PC-3 (cell line): ENCODE measurements at regions of chr15 and their contacts with region 1.

Region 1: DNA sequence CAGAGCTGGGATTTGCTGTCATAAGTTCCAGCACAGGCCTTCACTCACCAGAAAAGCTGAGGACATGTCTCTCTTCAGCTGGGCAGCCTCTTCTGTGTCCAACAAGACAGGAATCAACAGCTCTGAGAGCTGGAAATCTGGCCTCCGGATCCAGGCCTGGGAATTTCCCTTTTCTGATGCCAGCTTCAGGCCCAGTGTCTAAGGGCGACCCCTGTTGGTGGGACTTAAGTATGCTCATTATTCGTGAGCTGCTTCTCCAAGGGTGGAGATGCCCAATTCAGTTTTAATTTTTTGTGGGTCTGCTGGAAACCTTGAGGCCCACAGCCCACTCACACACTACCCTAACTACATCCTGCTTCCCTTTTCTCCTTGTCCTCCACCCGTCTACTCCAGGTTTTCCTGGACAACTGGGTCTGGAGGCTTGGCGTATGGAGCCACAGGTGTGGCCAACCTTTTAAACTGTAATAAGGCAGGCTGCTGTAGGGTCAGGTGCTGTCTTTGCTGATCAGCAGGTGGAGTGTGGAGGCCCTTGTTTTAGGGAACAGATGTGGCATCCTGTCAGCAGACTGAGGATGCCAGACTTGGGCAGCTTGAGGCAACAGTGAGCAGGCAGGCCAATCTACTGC is 2.6 kb upstream of the CEMIP start:
- DNase-seq: peak; percentile 74
- ATAC-seq: no peak
- H3K4me3 ChIP-seq: no peak overlapping the region
- H3K27ac ChIP-seq: peak overlapping the region; percentile 74
- H3K4me1 ChIP-seq: peaks cover 27% of the 10 kb centered on the region
- H3K27me3 ChIP-seq: 0 out of 2 replicates have a peak, but pooled peaks cover 4% of the 10 kb centered on the region
- CTCF ChIP-seq: peak; percentile 80

Region 2: DNA sequence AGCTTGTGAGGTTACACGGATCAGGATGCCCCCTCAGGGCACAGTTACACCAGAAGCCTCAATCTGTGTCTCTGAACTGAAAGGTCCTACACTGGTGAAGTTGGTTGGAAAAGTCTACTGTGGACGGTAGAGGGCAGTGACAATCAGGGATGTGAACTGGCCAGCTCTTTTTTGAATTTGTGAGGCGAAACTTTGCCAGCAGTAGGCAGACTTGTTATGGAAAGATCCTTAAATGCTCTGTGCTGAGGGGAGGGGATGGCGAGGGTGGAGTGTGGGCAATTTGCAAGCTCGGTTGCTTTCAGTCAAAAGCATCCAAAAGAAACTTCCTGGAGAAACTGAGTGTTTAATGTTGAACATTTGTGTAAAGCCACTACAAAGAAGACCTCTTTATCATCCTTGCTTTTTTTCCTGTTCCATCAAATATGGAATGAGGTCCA is 208.8 kb before region 1 on chr15:
- CTCF ChIA-PET with region 1: interaction called, 44 read pairs
- POLR2A ChIA-PET with region 1: no interaction called
- intact Hi-C with region 1: loop called (anchors 1 kb)
- DNase-seq: peak; percentile 82
- ATAC-seq: peak; percentile 89
- H3K4me3 ChIP-seq: no peak overlapping the region
- H3K27ac ChIP-seq: peak overlapping the region; percentile 27
- H3K4me1 ChIP-seq: peaks cover 7% of the 10 kb centered on the region
- H3K27me3 ChIP-seq: no peaks in the 10 kb centered on the region
- CTCF ChIP-seq: peak; percentile 95

Region 3: GRCh38 chr15:80609512-80609946 is 167.0 kb before region 1 on chr15:
- CTCF ChIA-PET with region 1: no interaction called
- POLR2A ChIA-PET with region 1: no interaction called
- intact Hi-C with region 1: loop called (anchors 5 kb)
- DNase-seq: peak; percentile 9
- ATAC-seq: peak; percentile 31; the same call in 1 of the 2 replicates
- H3K4me3 ChIP-seq: no peak overlapping the region
- H3K27ac ChIP-seq: no peak overlapping the region
- H3K4me1 ChIP-seq: 0 out of 2 replicates have a peak, but pooled peaks cover 2% of the 10 kb centered on the region
- H3K27me3 ChIP-seq: no peaks in the 10 kb centered on the region
- CTCF ChIP-seq: no peak

Region 4: DNA sequence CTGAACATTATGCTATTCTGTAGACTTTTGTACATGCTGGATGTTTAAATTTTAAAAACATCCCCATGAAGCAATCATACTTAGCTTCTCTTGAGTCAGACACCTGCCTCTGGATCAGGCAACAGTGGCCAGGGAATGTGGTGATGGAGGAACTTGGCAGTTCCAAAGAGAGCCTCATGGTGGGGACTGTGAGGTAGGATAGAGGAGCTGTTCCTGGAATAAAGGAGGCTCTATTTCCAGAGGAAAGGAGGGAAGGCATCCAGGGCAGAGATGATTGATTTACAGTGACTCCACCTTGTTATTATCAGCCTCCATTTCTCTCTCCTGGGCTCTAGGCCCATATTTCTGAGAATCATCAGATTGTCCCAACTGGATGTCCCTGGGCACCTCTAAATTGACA is 116.4 kb before region 1 on chr15:
- CTCF ChIA-PET with region 1: interaction called, 20 read pairs
- POLR2A ChIA-PET with region 1: no interaction called
- intact Hi-C with region 1: loop called (anchors 1 kb)
- DNase-seq: peak; percentile 79
- ATAC-seq: peak; percentile 98
- H3K4me3 ChIP-seq: no peak overlapping the region
- H3K27ac ChIP-seq: 0 out of 2 replicates have a peak overlapping the region, but pooled peaks have one; percentile 12
- H3K4me1 ChIP-seq: peaks cover 18% of the 10 kb centered on the region
- H3K27me3 ChIP-seq: no peaks in the 10 kb centered on the region
- CTCF ChIP-seq: peak; percentile 81

Region 5: DNA sequence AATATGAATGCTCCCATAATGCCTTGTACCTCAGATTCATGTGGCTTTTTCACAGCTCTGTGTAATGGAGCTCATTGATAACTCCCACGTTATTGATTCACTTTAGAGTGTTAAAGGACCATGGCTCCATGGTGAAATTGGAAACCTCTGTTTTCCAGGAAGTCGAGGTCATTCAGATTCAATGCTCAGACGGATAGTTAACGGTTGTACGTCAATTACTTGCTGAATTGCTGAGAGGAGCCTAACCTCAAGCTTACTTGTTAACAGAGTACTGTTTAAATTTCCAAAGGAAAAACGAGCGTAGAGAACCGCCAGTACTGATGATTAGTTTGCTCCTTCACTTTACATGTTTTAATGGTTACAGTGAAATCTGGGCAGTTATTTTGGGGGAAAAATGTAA is 70.4 kb before region 1 on chr15:
- CTCF ChIA-PET with region 1: no interaction called
- POLR2A ChIA-PET with region 1: no interaction called
- intact Hi-C with region 1: no loop called
- DNase-seq: no peak
- ATAC-seq: no peak
- H3K4me3 ChIP-seq: no peak overlapping the region
- H3K27ac ChIP-seq: no peak overlapping the region
- H3K4me1 ChIP-seq: peaks cover 25% of the 10 kb centered on the region
- H3K27me3 ChIP-seq: no peaks in the 10 kb centered on the region
- CTCF ChIP-seq: no peak

Region 6: DNA sequence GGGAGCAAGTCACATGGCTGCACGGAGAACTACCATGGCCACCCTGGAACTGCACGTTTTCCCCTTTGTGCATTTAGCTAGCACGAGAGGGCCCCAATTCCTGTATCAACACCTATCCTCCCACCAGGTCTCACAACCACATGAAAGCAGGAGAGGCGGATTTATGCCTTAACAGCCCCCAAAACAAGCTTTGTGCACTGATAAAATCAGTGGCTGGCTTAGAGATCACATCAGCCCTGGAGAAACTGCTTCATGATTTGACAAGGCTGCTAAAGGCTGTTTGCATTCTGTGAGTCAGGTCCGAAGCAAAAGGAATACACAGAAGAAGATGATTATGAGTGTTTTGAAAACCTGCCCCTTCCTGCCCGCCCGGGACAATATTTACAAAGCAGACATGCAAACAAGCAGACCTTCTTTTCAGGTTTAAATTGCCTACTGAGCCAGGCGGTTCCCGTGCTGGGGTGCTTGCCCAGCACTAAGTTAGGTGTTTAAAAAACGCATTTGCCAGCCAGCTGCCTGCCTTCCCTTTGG is 28.5 kb after region 1 on chr15:
- CTCF ChIA-PET with region 1: interaction called, 4 read pairs
- POLR2A ChIA-PET with region 1: no interaction called
- intact Hi-C with region 1: loop called (anchors 1 kb)
- DNase-seq: peak; percentile 85
- ATAC-seq: peak; percentile 78
- H3K4me3 ChIP-seq: peak overlapping the region; percentile 9; the same call in 1 of the 2 replicates
- H3K27ac ChIP-seq: peak overlapping the region; percentile 92
- H3K4me1 ChIP-seq: peaks cover 54% of the 10 kb centered on the region
- H3K27me3 ChIP-seq: no peaks in the 10 kb centered on the region
- CTCF ChIP-seq: no peak

Region 7: GRCh38 chr15:80878242-80879228 is 102.0 kb after region 1 on chr15:
- CTCF ChIA-PET with region 1: no interaction called
- POLR2A ChIA-PET with region 1: no interaction called
- intact Hi-C with region 1: no loop called
- DNase-seq: no peak
- ATAC-seq: no peak
- H3K4me3 ChIP-seq: no peak overlapping the region
- H3K27ac ChIP-seq: no peak overlapping the region
- H3K4me1 ChIP-seq: no peaks in the 10 kb centered on the region
- H3K27me3 ChIP-seq: no peaks in the 10 kb centered on the region
- CTCF ChIP-seq: no peak

Region 8: DNA sequence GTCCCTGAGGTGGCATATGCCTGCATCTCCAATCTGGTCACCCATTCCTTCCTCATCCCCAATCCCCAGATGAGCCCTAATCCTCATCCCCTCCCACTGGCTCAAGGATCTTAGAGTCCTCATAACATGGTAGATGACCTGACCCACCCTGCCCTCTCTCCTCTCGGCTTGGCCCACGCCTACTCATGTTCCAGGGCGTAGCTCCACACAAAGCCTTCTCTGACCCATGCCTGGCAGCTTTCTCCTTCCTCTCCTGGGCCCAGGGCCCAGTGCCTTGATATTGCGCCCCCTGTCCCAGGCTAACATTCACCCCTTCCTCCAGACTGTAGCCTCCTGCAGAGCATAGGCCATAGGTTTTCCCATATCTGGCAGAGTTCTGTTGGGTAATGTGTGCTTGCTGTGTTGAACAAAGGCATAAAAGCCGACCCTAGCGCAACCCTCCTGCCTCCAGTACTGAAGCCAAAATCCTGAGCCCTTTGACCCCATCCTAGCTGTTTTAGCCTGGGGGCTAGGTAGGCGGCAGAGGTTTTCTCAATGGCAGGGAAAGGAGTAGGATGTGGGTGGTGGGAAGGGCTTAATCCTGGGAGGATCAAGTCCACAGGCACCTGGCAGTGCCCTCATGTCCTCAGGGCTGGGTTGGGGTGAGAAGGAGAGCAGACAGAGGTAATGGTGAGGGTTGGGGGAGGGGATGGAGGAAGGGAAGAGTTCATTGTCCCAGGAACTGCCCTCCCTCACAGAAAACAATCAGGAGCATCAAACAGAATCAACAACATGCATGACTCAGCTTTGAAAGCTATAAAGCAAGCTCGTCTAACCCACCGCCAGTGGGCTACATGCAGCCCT is 177.6 kb after region 1 on chr15:
- CTCF ChIA-PET with region 1: no interaction called
- POLR2A ChIA-PET with region 1: no interaction called
- intact Hi-C with region 1: loop called (anchors 5 kb)
- DNase-seq: peak; percentile 89
- ATAC-seq: peak; percentile 37
- H3K4me3 ChIP-seq: no peak overlapping the region
- H3K27ac ChIP-seq: peak overlapping the region; percentile 80
- H3K4me1 ChIP-seq: peaks cover 33% of the 10 kb centered on the region
- H3K27me3 ChIP-seq: no peaks in the 10 kb centered on the region
- CTCF ChIP-seq: 0 out of 2 replicates have a peak, but pooled peaks have one; percentile 12